ENCODE measurements at regions of chr19 and their contacts with region 1.

Region 1: GRCh38 chr19:13764101-13764807 is at the start of gene MRI1:
- DNase-seq: peak; percentile 40 to 63
- ATAC-seq: peak; percentile 82 to 83
- H3K4me3 ChIP-seq: peak within 1 kb of the TSS; percentile 67 to 83 (median 72)
- H3K27ac ChIP-seq: peak within 1 kb of the TSS; percentile 65 to 80 (median 76)
- H3K4me1 ChIP-seq: peaks cover 8 to 9% of the 10 kb centered on the region in 2 donors
- H3K27me3 ChIP-seq: no peaks in the 10 kb centered on the region
- CTCF ChIP-seq: no peak
- POLR2A ChIP-seq: no peak
- total RNA-seq, gene MRI1: 21.1 to 26.1 (median 23.4) TPM

Region 2: DNA sequence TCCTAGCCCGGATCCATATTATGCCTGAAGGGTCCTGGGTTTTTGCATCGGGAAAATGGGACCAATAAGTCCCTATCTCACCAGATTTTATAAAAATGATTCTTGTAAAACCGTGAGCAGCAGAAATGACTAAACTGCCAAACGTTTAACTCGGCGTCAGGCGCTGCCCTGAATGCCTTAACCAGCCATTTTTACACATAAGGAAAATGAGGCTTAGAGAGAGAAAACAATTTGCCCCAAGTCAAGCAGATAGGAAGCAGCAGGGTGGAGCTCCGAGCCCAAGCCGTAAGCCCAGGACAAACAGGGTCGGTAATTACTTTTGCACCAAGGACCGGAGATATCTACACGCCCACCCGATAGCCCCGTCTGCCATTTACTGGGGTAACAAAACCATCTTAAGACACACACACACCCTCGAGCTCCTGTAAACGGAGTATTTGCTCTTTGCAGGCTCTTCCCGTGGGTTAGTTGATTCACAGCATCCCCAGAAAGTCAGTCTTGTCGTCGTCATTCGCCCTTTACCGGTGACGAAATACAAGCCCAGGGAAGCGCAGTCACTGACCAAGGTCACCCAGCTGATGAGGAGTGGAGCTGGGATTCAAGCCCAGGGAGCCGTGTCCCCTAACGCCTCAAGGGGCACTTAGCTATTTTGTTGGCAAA is 16.0 kb before region 1 on chr19:
- in situ Hi-C with region 1: no loop called
- intact Hi-C with region 1: loop called (anchors 2 kb)
- DNase-seq: no peak
- ATAC-seq: peak in 1 of 2 donors; percentile 1
- H3K4me3 ChIP-seq: peak overlapping the region; percentile 58 to 99 (median 90)
- H3K27ac ChIP-seq: peak overlapping the region; percentile 86 to 95 (median 90)
- H3K4me1 ChIP-seq: peaks cover 12 to 14% of the 10 kb centered on the region in 2 donors
- H3K27me3 ChIP-seq: no peaks in the 10 kb centered on the region
- CTCF ChIP-seq: no peak
- POLR2A ChIP-seq: no peak

Region 3: GRCh38 chr19:13825489-13826391 is 61.5 kb after region 1 on chr19:
- in situ Hi-C with region 1: no loop called
- intact Hi-C with region 1: no loop called
- DNase-seq: no peak
- ATAC-seq: no peak
- H3K4me3 ChIP-seq: no peak overlapping the region
- H3K27ac ChIP-seq: no peak overlapping the region
- H3K4me1 ChIP-seq: no peaks in the 10 kb centered on the region
- H3K27me3 ChIP-seq: no peaks in the 10 kb centered on the region
- CTCF ChIP-seq: no peak
- POLR2A ChIP-seq: no peak